ENCODE measurements at regions of chr22 and their contacts with region 1.

Region 1: GRCh38 chr22:21938071-21938822 is 14.4 kb downstream of the PPM1F start:
- DNase-seq: peak; percentile 97
- H3K4me3 ChIP-seq: peak overlapping the region; percentile 39 to 64 (median 61)
- H3K27ac ChIP-seq: peak overlapping the region; percentile 94 to 96 (median 94)
- H3K4me1 ChIP-seq: peaks cover 0 to 73% (median 58%) of the 10 kb centered on the region in 4 donors
- H3K27me3 ChIP-seq: no peaks in the 10 kb centered on the region
- CTCF ChIP-seq: peak; percentile 93 to 100 (median 100)
- EP300 ChIP-seq: no peak
- POLR2A ChIP-seq: no peak

Region 2: DNA sequence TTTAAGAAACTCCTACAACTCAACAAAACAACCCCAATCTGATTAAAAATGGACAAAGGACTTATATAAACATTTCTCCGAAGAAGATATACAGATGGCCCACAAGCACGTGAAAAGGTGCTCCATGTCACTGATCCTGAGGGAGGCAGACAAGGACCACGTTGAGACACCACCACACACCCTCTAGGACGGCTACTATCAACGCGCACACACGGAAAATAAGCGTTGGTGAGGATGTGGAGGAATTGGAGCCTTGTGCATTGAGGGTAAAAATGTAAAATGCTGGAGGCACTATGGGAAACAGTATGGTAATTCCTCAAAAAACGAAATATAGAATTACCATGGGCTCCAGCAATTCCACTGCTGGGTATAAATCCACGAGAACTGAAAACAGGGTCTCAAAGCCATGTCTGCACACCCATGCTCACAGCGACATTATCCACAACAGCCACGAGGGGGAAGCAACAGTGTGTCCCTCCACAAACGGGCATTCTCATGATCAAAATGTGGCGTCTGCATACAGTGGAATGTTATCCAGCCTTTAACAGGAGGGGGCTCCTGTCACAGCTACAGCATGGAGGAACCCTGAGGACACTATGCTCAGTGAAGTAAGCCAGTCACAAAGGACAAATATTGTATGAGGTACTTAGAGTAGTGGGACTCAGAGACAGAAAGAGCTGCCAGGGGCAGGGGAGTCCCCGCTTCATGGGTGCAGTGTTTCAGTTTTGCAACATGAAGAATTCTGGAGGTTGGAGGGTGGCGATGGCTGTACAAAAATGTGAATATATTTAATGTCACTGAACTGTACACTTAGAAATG is 225.1 kb before region 1 on chr22:
- intact Hi-C with region 1: loop called (anchors 1 kb)
- DNase-seq: no peak
- H3K4me3 ChIP-seq: peak overlapping the region in 2 of 4 donors; percentile 7 to 14
- H3K27ac ChIP-seq: peak overlapping the region; percentile 0 to 54 (median 19)
- H3K4me1 ChIP-seq: peaks cover 0 to 15% (median 6%) of the 10 kb centered on the region in 4 donors
- H3K27me3 ChIP-seq: no peaks in the 10 kb centered on the region
- CTCF ChIP-seq: peak; percentile 75 to 84 (median 82)
- EP300 ChIP-seq: no peak
- POLR2A ChIP-seq: no peak

Region 3: GRCh38 chr22:21952586-21953571 is 14.6 kb after region 1 on chr22 and contains the start of gene PPM1F:
- intact Hi-C with region 1: loop called (anchors 1 kb)
- DNase-seq: peak; percentile 91
- H3K4me3 ChIP-seq: peak within 1 kb of the TSS; percentile 67 to 83 (median 70)
- H3K27ac ChIP-seq: peak within 1 kb of the TSS; percentile 73 to 79 (median 74)
- H3K4me1 ChIP-seq: peaks cover 0 to 27% (median 18%) of the 10 kb centered on the region in 4 donors
- H3K27me3 ChIP-seq: no peaks in the 10 kb centered on the region
- CTCF ChIP-seq: peak; percentile 12 to 93 (median 62)
- EP300 ChIP-seq: no peak
- POLR2A ChIP-seq: no peak
- total RNA-seq, gene PPM1F: 20.3 to 39.2 (median 30.6) TPM

Region 4: GRCh38 chr22:21963790-21964211 is 25.6 kb after region 1 on chr22:
- intact Hi-C with region 1: no loop called
- DNase-seq: no peak
- H3K4me3 ChIP-seq: no peak overlapping the region
- H3K27ac ChIP-seq: no peak overlapping the region
- H3K4me1 ChIP-seq: no peaks in the 10 kb centered on the region
- H3K27me3 ChIP-seq: no peaks in the 10 kb centered on the region
- CTCF ChIP-seq: no peak
- EP300 ChIP-seq: no peak
- POLR2A ChIP-seq: no peak